Activated CD4-positive, alpha-beta T cell treated with anti-CD3 and anti-CD28 coated beads, Interleukin-2, amount 10 ng/mL, durations not matched to agents 24 days and 14 days (primary cell): ENCODE measurements at regions of chr2 and their contacts with region 1.

Region 1: DNA sequence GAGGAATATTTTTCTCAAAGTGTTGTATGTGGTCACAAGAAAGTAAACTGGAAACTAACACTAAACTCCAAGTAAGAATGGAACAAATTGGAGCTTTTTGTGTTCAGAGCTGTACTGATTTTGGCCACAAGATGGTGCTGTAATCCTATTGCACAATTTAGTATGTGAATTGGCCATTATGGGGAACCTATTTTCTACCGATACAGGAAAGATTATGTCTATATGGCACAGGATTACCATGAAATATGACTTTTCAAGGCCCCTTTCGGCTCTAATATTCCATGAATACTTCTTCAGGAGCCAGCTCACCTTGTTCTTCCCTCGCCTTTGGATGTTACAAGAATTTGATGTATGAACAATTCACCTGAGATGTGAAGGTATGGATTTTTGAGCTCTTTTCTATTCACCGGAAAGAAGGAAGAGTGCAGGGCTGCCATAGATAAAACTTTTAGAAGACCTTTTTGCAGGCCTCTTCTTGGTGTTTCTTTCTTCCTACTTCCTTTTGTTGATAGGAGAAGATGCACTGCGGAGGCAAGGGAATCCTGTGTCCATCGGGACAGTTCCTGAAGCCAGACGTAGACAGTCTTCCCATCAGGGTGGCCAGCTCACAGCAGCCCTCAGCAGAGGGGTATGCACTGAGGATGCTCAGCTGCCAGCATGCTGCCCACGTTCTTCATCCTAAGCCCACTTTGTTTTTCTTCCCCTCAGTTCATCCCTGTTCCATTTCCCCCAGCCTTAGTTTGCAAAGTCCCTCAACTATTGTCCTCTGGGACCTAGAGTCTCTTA is 13.3 kb downstream of the MRPL44 start:
- DNase-seq: peak; percentile 90
- H3K4me3 Mint-ChIP-seq: no peak overlapping the region
- H3K27ac Mint-ChIP-seq: no peak overlapping the region
- H3K4me1 Mint-ChIP-seq: peaks cover 9% of the 10 kb centered on the region
- H3K27me3 Mint-ChIP-seq: no peaks in the 10 kb centered on the region

Region 2: DNA sequence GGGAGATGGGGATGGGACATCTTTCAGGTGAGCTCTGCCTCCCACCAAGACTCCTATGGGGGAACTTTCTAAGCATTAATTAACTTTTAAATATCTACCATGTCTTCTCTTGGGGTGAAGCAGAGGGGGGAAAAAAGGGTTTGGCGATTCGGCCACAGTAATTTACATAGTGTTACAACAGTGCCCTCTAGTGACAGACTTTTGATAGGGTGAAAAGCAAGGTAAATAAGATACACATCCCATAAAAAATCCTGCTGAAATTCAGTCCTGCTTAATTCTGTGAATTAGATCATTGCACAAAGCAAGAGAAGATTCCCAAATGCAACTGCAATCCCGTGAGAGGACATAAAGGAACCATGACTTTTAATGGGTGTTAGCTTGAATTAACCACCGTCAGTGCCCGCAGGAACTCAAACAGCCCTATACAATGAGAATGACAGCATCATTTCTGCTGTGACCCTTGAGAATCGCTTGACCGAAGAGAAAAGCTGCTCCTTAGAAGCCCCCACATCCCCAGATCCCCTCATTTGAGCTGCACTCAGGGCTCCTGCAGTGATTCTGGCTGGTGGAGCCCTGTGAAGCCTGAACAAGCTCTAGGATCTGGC is 398.6 kb after region 1 on chr2:
- intact Hi-C with region 1: loop called (anchors 2 kb)
- DNase-seq: peak; percentile 72
- H3K4me3 Mint-ChIP-seq: no peak overlapping the region
- H3K27ac Mint-ChIP-seq: no peak overlapping the region
- H3K4me1 Mint-ChIP-seq: no peaks in the 10 kb centered on the region
- H3K27me3 Mint-ChIP-seq: peaks cover 13% of the 10 kb centered on the region